ENCODE measurements at regions of chr6 and their contacts with region 1.

Region 1: DNA sequence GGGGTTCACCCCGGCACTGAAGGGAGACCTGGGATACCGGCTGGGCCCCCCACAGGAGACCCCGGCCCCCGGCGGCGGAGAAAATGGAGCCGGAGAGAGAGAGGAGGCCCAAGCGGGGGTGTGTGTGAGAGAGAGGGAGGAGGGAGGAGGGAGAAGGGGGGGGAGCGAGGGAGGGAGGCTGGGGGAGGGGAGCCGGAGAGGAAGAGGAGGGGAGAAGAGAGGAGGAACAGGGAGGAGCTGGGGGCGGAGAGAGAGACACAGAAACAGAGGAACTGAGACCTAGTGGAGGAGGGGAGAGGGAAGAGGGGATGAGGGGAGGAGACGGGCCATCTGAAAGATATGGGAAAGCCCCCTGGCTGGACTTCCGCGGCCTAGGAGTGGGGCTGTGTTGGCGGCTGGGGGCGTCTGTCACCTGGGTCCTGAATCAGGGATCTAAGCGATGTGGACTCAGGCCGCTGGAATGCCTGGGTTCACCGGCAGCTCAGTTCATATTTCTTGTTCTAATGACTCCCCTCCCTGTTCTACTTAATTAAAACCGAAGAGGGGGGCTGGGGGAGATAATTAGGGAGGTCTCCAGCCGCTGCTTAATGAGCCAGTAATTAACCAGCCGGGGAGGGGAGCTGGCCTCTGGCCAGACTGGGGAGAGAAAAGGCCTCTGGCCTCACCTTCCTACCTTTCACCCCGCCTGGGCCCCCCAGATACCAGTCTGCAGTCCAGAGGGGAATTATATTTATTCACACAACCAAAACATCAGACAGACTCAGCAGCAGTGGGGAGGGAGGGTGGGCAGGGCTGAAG is at the start of gene PBX2:
- DNase-seq: peak; percentile 73 to 85 (median 76)
- H3K4me3 ChIP-seq: peak within 1 kb of the TSS; percentile 81 to 99
- H3K4me3 Mint-ChIP-seq: peak within 1 kb of the TSS; percentile 98 to 100 (median 99)
- H3K27ac ChIP-seq: peak within 1 kb of the TSS; percentile 98
- H3K27ac Mint-ChIP-seq: peak within 1 kb of the TSS; percentile 93 to 100 (median 99)
- H3K4me1 ChIP-seq: peaks cover 64% of the 10 kb centered on the region
- H3K4me1 Mint-ChIP-seq: peaks cover 48 to 85% (median 54%) of the 10 kb centered on the region in 4 donors
- H3K27me3 ChIP-seq: no peaks in the 10 kb centered on the region
- H3K27me3 Mint-ChIP-seq: no peaks in the 10 kb centered on the region
- total RNA-seq, gene PBX2: 188 to 192 TPM

Region 2: DNA sequence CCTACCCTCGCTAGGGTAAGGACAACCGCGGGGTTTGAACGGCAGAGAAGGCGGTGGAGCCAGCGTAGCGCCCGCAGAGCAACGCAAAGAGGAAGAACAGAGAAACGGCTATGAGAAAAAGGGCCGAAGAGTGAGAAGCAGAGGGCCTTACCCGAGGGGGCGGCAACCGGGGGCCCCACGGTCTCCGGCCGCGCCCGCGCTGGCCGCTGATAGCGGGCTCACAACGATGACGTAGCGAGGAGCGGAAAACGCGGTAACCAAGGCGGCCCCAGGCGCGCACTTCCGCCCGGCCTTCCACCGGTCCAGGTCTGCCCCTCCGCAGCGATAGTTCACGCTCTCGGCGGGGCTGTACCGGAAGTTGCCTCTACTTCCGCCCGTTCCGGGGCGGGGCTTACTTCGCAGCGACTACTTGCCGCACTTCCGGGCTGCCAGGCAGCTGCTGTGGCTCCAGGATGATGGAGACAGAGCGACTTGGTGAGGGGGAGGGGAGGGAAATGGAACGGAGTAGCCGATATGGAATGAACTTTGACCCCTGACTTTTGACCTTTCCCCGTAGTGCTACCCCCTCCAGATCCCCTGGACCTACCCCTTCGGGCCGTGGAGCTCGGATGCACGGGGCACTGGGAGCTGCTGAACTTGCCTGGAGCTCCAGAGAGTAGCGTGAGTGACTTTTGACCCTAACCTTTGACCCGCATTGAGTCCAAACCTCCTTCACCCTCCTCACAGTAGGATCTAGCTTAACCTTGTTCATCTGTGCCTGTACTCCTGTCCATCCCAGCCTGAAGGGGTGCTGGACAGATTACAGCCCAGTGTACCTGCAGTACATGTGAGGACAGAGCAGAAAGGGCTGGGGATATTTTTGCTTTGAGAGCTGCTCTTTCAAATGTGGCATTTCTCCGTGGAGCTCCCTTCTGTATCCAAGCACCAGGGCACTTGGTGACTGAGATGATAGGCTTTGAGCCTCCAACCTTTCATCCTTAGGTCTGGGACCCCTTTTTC is 231.2 kb before region 1 on chr6 and contains the starts of genes NELFE and SKIC2:
- CTCF ChIA-PET with region 1: no interaction called
- POLR2A ChIA-PET with region 1: interaction called, 5 read pairs
- intact Hi-C with region 1: loop called (anchors 2 kb)
- DNase-seq: peak; percentile 98 to 99 (median 99)
- H3K4me3 ChIP-seq: peak within 1 kb of the TSS; percentile 95
- H3K4me3 Mint-ChIP-seq: peak within 1 kb of the TSS; percentile 92 to 98 (median 96)
- H3K27ac ChIP-seq: peak within 1 kb of the TSS; percentile 98
- H3K27ac Mint-ChIP-seq: peak within 1 kb of the TSS; percentile 97 to 99 (median 98)
- H3K4me1 ChIP-seq: peaks cover 35% of the 10 kb centered on the region
- H3K4me1 Mint-ChIP-seq: peaks cover 21 to 43% (median 32%) of the 10 kb centered on the region in 4 donors
- H3K27me3 ChIP-seq: no peaks in the 10 kb centered on the region
- H3K27me3 Mint-ChIP-seq: no peaks in the 10 kb centered on the region
- total RNA-seq, gene NELFE: 45.8 to 49.0 TPM
- total RNA-seq, gene SKIC2: 117 to 119 TPM

Region 3: GRCh38 chr6:32118782-32119628 is 71.2 kb before region 1 on chr6:
- CTCF ChIA-PET with region 1: interaction called, 13 read pairs
- POLR2A ChIA-PET with region 1: interaction called, 9 read pairs
- intact Hi-C with region 1: loop called (anchors 1 kb)
- DNase-seq: peak in 4 of 5 donors; percentile 59 to 65 (median 63)
- H3K4me3 ChIP-seq: no peak overlapping the region
- H3K4me3 Mint-ChIP-seq: no peak overlapping the region
- H3K27ac ChIP-seq: no peak overlapping the region
- H3K27ac Mint-ChIP-seq: peak overlapping the region in 6 of 7 donors; percentile 47 to 90 (median 72)
- H3K4me1 ChIP-seq: peaks cover 8% of the 10 kb centered on the region
- H3K4me1 Mint-ChIP-seq: peaks cover 3 to 19% (median 11%) of the 10 kb centered on the region in 4 donors
- H3K27me3 ChIP-seq: no peaks in the 10 kb centered on the region
- H3K27me3 Mint-ChIP-seq: no peaks in the 10 kb centered on the region

Region 4: GRCh38 chr6:32127717-32128592 is 62.3 kb before region 1 on chr6 and contains the start of gene ATF6B:
- CTCF ChIA-PET with region 1: interaction called, 15 read pairs
- POLR2A ChIA-PET with region 1: interaction called, 188 read pairs
- intact Hi-C with region 1: loop called (anchors 1 kb)
- DNase-seq: peak; percentile 92 to 100 (median 98)
- H3K4me3 ChIP-seq: peak within 1 kb of the TSS; percentile 74 to 87
- H3K4me3 Mint-ChIP-seq: peak within 1 kb of the TSS; percentile 97 to 100 (median 99)
- H3K27ac ChIP-seq: peak within 1 kb of the TSS; percentile 83
- H3K27ac Mint-ChIP-seq: peak within 1 kb of the TSS; percentile 89 to 99 (median 99)
- H3K4me1 ChIP-seq: peaks cover 35% of the 10 kb centered on the region
- H3K4me1 Mint-ChIP-seq: peaks cover 33 to 57% (median 46%) of the 10 kb centered on the region in 4 donors
- H3K27me3 ChIP-seq: no peaks in the 10 kb centered on the region
- H3K27me3 Mint-ChIP-seq: peaks cover 0 to 2% of the 10 kb centered on the region in 2 donors
- total RNA-seq, gene ATF6B: 151 to 154 TPM

Region 5: GRCh38 chr6:32153564-32154513 is 36.4 kb before region 1 on chr6 and contains the start of gene PPT2:
- CTCF ChIA-PET with region 1: interaction called, 6 read pairs
- POLR2A ChIA-PET with region 1: interaction called, 14 read pairs
- intact Hi-C with region 1: loop called (anchors 1 kb)
- DNase-seq: peak; percentile 62 to 84 (median 70)
- H3K4me3 ChIP-seq: peak within 1 kb of the TSS; percentile 78 to 98
- H3K4me3 Mint-ChIP-seq: peak within 1 kb of the TSS; percentile 95 to 100 (median 98)
- H3K27ac ChIP-seq: peak within 1 kb of the TSS; percentile 42
- H3K27ac Mint-ChIP-seq: peak within 1 kb of the TSS; percentile 92 to 98 (median 94)
- H3K4me1 ChIP-seq: peaks cover 16% of the 10 kb centered on the region
- H3K4me1 Mint-ChIP-seq: peaks cover 30 to 58% (median 41%) of the 10 kb centered on the region in 4 donors
- H3K27me3 ChIP-seq: peaks cover under 1% of the 10 kb centered on the region
- H3K27me3 Mint-ChIP-seq: peaks cover 15 to 25% of the 10 kb centered on the region in 2 donors
- total RNA-seq, gene PPT2: 12.7 to 15.4 TPM

Region 6: DNA sequence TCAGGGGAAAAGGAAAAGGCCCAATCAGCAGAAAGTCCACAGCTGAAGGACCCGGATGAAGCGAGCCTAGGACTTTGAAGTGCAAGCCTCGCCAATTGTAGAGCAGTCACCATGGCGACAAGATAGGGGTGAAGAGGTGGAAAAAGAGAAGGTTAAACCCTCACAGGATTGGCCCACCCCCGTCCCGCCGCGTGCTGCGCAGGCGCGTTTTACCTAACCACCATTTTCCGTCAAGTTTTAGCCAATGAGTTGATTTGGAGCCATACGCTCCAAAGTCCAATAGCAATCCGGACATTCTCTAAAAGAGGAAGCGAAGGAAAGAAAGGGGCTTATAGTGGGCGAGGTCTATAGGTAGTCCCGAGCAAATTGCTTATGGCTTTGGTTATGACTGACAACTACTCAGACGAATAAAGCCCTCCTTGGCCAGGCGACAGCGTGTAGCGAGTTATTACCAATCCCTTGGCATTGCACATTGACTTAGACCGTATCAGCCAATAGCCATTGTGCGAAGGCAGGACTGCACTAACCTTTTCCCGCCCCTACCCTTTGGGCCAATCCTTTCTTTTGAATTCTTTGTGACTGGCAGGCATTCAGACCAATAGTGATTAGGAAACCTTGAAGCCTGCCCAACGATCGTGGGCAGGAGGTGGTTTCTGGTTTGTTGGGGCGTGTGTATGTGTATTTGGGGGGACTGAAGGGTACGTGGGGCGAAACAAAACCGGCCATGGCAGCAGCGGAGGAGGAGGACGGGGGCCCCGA is 12.3 kb before region 1 on chr6 and contains the start of gene RNF5:
- CTCF ChIA-PET with region 1: interaction called, 18 read pairs
- POLR2A ChIA-PET with region 1: interaction called, 408 read pairs
- intact Hi-C with region 1: loop called (anchors 1 kb)
- DNase-seq: peak; percentile 96 to 99 (median 98)
- H3K4me3 ChIP-seq: peak within 1 kb of the TSS; percentile 74 to 87
- H3K4me3 Mint-ChIP-seq: peak within 1 kb of the TSS; percentile 92 to 100 (median 96)
- H3K27ac ChIP-seq: peak within 1 kb of the TSS; percentile 91
- H3K27ac Mint-ChIP-seq: peak within 1 kb of the TSS; percentile 97 to 100 (median 99)
- H3K4me1 ChIP-seq: peaks cover 79% of the 10 kb centered on the region
- H3K4me1 Mint-ChIP-seq: peaks cover 50 to 84% (median 66%) of the 10 kb centered on the region in 4 donors
- H3K27me3 ChIP-seq: no peaks in the 10 kb centered on the region
- H3K27me3 Mint-ChIP-seq: no peaks in the 10 kb centered on the region
- total RNA-seq, gene RNF5: 44.2 to 47.7 TPM

Region 7: DNA sequence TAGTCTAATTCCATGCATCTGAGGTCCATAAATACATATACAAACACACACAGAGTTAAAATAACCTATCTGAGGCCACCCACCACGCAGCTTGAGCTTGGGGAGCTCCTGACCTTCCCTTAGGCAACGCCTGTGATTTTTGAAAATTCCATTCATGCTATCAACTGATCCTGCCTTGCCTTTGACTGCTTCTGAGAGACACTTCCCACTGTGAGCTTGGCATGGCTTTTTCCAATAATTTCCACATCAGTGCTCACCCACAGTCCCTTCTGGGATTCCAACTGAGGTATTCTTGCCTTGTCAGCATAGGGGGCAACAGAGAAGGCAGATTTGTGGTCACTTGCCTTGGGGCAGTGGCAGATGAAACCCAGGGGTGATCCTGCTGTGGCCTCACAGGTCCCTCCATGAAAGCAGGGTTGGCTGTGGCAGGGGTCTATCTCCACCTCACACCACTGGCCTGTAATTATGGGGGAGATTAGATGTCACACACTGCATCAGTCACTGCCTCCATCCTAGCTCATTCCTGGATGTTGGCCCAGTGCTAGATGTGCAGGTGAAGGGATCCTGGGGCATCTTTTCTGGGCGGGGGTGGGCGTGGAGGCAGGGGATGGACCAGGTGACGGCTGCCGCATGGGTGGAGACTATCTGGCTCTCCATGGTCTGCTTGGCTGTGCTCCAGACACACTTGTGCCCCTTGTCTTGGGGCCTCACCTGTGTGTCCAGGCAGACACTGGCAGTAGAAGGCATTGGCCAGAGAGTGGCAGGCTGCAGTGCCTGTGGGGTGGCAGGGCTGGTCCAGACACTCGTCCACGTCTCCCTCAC is 13.4 kb after region 1 on chr6:
- CTCF ChIA-PET with region 1: no interaction called
- POLR2A ChIA-PET with region 1: interaction called, 10 read pairs
- intact Hi-C with region 1: no loop called
- DNase-seq: no peak
- H3K4me3 ChIP-seq: no peak overlapping the region
- H3K4me3 Mint-ChIP-seq: no peak overlapping the region
- H3K27ac ChIP-seq: no peak overlapping the region
- H3K27ac Mint-ChIP-seq: no peak overlapping the region
- H3K4me1 ChIP-seq: no peaks in the 10 kb centered on the region
- H3K4me1 Mint-ChIP-seq: no peaks in the 10 kb centered on the region
- H3K27me3 ChIP-seq: no peaks in the 10 kb centered on the region
- H3K27me3 Mint-ChIP-seq: peaks cover 0 to 8% of the 10 kb centered on the region in 2 donors

Measured in CD4-positive, alpha-beta memory T cell (primary cell).